CD8-positive, alpha-beta T cell (primary cell): ENCODE measurements at regions of chr19 and their contacts with region 1.

Region 1: GRCh38 chr19:48872182-48872883 is at the start of gene PPP1R15A:
- DNase-seq: peak; percentile 95 to 99 (median 98)
- ATAC-seq: peak; percentile 41
- H3K4me3 ChIP-seq: peak within 1 kb of the TSS; percentile 88 to 90
- H3K4me3 Mint-ChIP-seq: peak within 1 kb of the TSS; percentile 97
- H3K27ac ChIP-seq: peak within 1 kb of the TSS; percentile 98 to 99
- H3K27ac Mint-ChIP-seq: peak within 1 kb of the TSS; percentile 100
- H3K4me1 ChIP-seq: peaks cover 32% of the 10 kb centered on the region
- H3K4me1 Mint-ChIP-seq: peaks cover 34% of the 10 kb centered on the region
- H3K27me3 ChIP-seq: no peaks in the 10 kb centered on the region
- H3K27me3 Mint-ChIP-seq: no peaks in the 10 kb centered on the region
- CTCF ChIP-seq: no peak
- total RNA-seq, gene PPP1R15A: 398 to 399 TPM

Region 2: GRCh38 chr19:49869441-49870176 is 997.3 kb after region 1 on chr19:
- CTCF ChIA-PET with region 1: no interaction called
- POLR2A ChIA-PET with region 1: no interaction called
- intact Hi-C with region 1: loop called in 1 of 2 experiments (anchors 2 kb)
- DNase-seq: peak; percentile 81 to 98 (median 89)
- ATAC-seq: peak; percentile 75
- H3K4me3 ChIP-seq: peak overlapping the region; percentile 73 to 85
- H3K4me3 Mint-ChIP-seq: no peak overlapping the region
- H3K27ac ChIP-seq: peak overlapping the region; percentile 64 to 96
- H3K27ac Mint-ChIP-seq: no peak overlapping the region
- H3K4me1 ChIP-seq: peaks cover 36% of the 10 kb centered on the region
- H3K4me1 Mint-ChIP-seq: peaks cover 41% of the 10 kb centered on the region
- H3K27me3 ChIP-seq: no peaks in the 10 kb centered on the region
- H3K27me3 Mint-ChIP-seq: no peaks in the 10 kb centered on the region
- CTCF ChIP-seq: no peak